PC-9 (cell line): ENCODE measurements at regions of chr17 and their contacts with region 1.

Region 1: DNA sequence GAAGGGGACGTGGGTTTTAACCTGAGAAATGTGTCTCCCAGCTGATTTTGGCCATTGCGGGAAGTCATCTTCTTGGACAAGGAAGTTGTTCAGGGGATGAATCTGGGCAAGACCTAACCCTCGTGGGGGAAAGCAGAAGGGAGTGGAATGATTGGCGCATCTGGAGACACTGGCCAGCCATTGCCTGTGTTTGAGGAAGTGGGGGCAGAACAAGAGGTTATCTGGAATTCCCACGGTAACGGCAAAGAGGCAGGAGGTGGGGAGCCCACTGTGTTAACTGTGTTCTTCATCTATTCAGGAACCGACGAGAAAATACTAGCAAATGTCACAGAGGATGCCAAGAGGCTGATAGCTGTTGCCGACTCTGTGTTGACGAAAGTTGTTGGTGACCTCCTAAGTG is 66.9 kb downstream of the RNF213 start:
- DNase-seq: no peak
- H3K4me3 ChIP-seq: no peak overlapping the region
- H3K27ac ChIP-seq: no peak overlapping the region
- H3K4me1 ChIP-seq: no peaks in the 10 kb centered on the region
- H3K27me3 ChIP-seq: no peaks in the 10 kb centered on the region
- CTCF ChIP-seq: no peak

Region 2: DNA sequence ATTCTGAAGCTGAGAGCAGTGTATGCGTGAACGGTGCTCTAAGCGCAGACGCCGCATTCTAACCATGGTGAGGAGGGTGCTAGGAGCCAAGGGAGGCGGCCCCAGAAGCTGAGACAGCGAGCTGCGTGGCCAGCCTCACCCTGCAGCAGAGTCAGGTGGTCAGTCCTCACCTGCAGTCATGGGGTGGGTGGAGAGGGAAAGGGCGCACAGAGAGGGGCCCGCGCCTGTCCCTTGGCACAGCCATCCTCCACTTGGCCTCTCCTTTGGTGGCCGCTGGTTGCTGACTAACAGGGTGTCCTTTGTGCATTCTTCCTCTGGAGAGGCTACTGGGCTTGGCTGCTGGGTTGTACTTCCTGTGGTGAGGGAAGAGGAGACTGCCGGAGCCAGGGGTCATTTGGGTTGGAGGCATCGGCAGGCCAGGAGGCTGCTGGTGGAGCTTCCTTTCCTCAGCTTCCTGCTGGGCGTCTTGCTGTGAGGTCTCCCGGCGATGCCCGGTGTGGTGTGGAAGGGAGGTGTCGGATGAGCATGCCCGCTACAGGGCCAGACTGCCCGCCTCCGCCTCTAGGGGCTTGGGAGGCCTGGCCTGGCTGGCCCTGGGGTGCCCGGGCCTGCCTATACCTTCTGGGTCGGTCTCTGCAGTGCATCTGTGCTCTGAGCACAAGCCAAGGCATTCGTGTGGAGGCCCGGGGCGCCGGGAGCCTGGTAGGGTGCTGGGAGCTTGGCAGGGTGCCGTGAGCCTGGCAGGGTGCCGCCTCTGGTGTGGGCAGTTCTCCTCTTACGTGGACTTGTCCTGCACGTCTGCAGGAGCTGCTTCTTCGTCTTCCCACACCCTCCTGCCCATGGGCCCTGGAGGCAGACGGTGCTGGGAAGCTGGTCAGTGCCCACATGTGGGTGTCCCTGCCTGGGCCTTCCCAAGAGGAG is 49.5 kb before region 1 on chr17:
- CTCF ChIA-PET with region 1: no interaction called
- POLR2A ChIA-PET with region 1: no interaction called
- intact Hi-C with region 1: loop called (anchors 2 kb)
- DNase-seq: peak in 1 of 2 experiments; percentile 24
- H3K4me3 ChIP-seq: no peak overlapping the region
- H3K27ac ChIP-seq: no peak overlapping the region
- H3K4me1 ChIP-seq: no peaks in the 10 kb centered on the region
- H3K27me3 ChIP-seq: no peaks in the 10 kb centered on the region
- CTCF ChIP-seq: no peak